Activated B cell treated with CpG ODN at 0.5 μM for 24 hours (primary cell): ENCODE measurements at regions of chr9 and their contacts with region 1.

Region 1: DNA sequence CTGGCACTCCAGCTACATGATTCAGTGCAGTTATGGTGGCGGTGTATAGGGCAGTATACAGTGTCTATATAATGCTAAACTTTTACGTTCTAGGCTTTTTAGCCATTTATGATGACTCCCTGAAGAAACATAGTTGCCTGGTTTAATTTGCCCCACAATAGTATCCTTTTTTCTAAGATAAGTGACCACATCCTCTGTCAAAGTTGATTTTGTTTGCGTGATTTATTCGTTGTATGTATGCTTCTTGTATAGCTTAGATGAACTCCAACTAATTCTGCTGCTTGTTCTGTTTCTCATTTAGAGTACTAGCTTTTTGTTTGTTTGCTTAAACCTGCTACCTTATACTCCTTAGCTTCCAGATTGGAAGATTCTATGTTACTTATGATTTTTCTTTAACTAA is 83.6 kb downstream of the ERMP1 start:
- DNase-seq: no peak
- ATAC-seq: no peak
- H3K4me3 Mint-ChIP-seq: no peak overlapping the region
- H3K27ac Mint-ChIP-seq: no peak overlapping the region
- H3K4me1 Mint-ChIP-seq: no peaks in the 10 kb centered on the region
- H3K27me3 Mint-ChIP-seq: no peaks in the 10 kb centered on the region
- CTCF ChIP-seq: no peak

Region 2: DNA sequence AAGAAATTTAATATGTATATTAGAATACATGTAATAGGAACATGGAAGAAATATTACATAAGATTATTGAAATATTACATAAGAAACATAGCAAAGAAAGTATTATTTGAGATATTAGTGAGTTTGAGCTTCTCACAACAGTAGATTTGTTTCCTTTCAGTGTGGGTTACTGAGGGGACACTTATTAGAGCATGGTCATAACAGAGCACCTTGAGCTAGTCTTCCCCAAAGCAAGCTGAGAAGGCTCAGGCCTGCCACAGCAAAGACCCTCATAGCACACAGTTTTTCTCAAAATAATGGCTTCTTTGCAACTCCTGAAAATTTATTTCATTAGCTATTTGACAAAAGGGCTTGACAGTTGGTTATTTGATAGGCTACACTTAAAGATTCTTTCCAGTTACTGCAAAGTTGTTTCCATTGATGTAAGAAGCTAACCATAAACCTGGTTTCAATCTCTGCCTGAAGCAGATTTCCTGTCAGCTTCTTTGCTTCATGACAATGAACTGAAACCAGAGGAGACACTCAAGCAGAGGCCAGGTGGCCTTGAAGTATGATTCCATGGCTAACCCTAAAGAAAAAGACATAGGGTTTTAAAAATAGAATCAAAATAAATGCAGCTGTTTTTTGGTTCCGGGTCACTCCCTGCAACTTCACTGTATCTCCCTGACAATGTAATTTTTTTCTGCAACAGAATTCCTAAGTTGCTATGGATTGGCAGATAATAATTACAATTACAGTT is 15.0 kb after region 1 on chr9:
- CTCF ChIA-PET with region 1: no interaction called
- POLR2A ChIA-PET with region 1: no interaction called
- intact Hi-C with region 1: no loop called
- DNase-seq: no peak
- ATAC-seq: no peak
- H3K4me3 Mint-ChIP-seq: no peak overlapping the region
- H3K27ac Mint-ChIP-seq: no peak overlapping the region
- H3K4me1 Mint-ChIP-seq: peaks cover 10% of the 10 kb centered on the region
- H3K27me3 Mint-ChIP-seq: no peaks in the 10 kb centered on the region
- CTCF ChIP-seq: no peak

Region 3: DNA sequence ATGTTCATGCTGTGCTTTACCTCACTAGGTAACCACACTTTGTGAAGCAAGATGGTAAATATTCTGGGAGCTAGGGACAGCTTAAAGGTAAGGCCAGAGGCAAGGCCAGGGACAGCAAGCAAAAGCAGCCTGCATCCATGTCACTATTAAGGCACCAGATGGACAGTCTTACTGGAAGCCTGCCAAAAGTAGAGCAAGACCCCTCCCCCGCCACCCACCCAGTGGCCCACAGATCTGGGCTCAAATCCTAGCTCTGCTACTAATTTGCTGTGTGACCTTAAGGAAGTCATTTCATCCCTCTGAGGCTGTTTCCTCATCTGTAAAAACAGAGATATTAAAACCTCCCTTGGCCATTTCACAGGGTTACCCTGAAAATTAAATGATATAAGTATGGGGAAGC is 96.8 kb after region 1 on chr9:
- CTCF ChIA-PET with region 1: no interaction called
- POLR2A ChIA-PET with region 1: interaction called, 15 read pairs
- intact Hi-C with region 1: no loop called
- DNase-seq: no peak
- ATAC-seq: no peak
- H3K4me3 Mint-ChIP-seq: no peak overlapping the region
- H3K27ac Mint-ChIP-seq: no peak overlapping the region
- H3K4me1 Mint-ChIP-seq: peaks cover 28% of the 10 kb centered on the region
- H3K27me3 Mint-ChIP-seq: no peaks in the 10 kb centered on the region
- CTCF ChIP-seq: no peak